Ascending aorta (tissue), 2 donors: ENCODE measurements at regions of chr4 and their contacts with region 1.

Region 1: DNA sequence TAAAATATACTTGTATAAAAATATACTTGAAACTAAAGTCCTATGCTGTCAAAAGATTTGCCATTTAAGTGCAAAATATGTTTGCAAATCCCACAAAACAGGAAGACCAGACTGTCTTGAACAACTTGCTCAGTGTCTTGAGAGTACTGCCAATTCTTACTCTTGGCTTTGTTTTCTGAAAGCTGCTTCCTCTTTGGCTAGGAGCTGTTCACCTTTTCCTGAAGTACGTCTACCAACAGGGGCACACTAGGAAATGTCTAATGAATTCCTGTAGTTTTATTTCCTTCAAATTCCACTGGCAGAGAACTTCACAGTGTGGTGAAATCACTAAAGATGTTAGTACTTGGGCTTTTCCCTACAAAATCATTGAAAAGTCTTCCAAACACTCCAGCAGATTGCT is 46.4 kb upstream of the ABCG2 start:
- DNase-seq: no peak
- H3K4me3 ChIP-seq: no peak overlapping the region
- H3K27ac ChIP-seq: no peak overlapping the region
- H3K4me1 ChIP-seq: no peaks in the 10 kb centered on the region
- H3K27me3 ChIP-seq: no peaks in the 10 kb centered on the region
- CTCF ChIP-seq: no peak

Region 2: GRCh38 chr4:88033309-88033708 is 171.6 kb before region 1 on chr4:
- intact Hi-C with region 1: loop called (anchors 5 kb)
- DNase-seq: no peak
- H3K4me3 ChIP-seq: no peak overlapping the region
- H3K27ac ChIP-seq: no peak overlapping the region
- H3K4me1 ChIP-seq: peaks cover 4 to 14% of the 10 kb centered on the region in 2 donors
- H3K27me3 ChIP-seq: no peaks in the 10 kb centered on the region
- CTCF ChIP-seq: peak in 2 of 3 experiments; percentile 52 to 68